ENCODE measurements at regions of chr11 and their contacts with region 1.

Region 1: DNA sequence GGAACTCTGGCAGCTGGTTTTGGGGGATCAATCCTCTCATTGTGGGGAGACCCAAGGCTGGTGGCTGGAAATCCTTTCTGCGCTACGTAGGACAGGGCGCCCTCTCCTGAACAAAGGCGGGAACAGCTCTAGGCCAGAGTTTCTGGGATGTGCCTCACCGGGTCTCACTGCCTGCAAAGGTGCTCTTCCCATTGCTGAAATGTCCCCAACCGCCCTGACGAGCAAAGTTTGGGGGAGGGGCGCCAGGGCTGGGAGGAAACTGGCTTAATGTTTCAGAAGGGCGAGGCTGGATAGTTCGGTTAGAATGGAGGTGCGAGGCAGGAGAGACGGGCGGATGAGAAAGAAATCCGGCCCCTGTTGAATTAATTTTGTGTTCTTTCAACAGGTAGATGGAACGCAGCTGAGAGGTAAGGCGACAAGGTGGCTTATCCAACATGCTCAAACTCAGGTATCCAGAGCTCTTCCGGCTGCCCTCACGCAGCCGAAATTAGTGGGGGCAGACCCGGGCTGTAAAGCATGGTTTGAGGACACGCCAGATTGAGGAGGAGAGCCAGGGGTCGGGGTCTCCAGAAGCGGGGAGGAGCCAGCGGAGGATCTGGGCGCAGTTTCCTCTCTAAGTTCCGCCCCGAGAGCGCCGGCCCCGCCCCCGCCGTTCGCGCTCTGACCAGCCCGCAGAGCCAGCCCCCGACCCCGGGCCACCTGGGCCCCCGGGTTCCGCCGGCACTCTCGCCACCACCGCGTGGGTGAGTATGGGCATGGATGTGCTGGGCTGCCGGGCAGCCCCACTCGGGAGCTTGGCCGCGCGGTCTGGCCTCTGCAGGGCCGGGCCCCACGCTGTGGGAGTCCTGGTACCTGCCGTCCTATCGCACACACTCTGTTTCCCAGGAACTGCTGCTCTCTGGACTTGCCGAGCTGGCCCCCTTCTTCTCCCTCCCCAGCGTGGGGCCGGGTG is at the start of gene PGAP2:
- DNase-seq: peak; percentile 71
- ATAC-seq: peak; percentile 85
- H3K4me3 ChIP-seq: peak within 1 kb of the TSS; percentile 91 to 99 (median 96)
- H3K4me3 Mint-ChIP-seq: peak within 1 kb of the TSS; percentile 98
- H3K27ac ChIP-seq: peak within 1 kb of the TSS; percentile 59 to 60
- H3K27ac Mint-ChIP-seq: peak within 1 kb of the TSS; percentile 92
- H3K4me1 ChIP-seq: peaks cover 6 to 17% of the 10 kb centered on the region in 2 donors
- H3K4me1 Mint-ChIP-seq: peaks cover 11% of the 10 kb centered on the region
- H3K27me3 ChIP-seq: no peaks in the 10 kb centered on the region
- H3K27me3 Mint-ChIP-seq: no peaks in the 10 kb centered on the region
- CTCF ChIP-seq: peak; percentile 61
- total RNA-seq, gene PGAP2: 20.5 and 20.8 TPM in 2 replicates

Region 2: DNA sequence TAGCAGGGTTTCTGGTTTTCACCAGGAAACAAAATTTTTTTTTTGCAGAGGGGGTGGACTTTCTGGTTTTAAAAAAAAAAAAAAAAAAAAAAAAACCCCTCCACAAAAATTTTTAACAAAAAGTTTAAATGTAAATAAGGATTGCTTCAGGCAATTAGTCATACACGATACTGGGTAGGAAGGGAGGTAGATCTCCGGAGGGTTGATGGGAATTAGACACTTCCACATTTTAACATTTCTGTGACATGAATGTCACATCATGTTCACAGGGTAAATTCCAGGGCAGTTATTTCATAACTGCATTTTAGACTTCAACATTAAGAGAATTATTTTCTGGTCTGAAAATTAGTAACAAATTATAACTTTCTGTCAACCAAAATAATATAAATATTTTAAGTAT is 26.8 kb before region 1 on chr11:
- CTCF ChIA-PET with region 1: interaction called, 23 read pairs
- POLR2A ChIA-PET with region 1: interaction called, 4 read pairs
- intact Hi-C with region 1: loop called (anchors 2 kb)
- DNase-seq: no peak
- ATAC-seq: no peak
- H3K4me3 ChIP-seq: no peak overlapping the region
- H3K4me3 Mint-ChIP-seq: no peak overlapping the region
- H3K27ac ChIP-seq: peak overlapping the region in 1 of 2 donors; percentile 50
- H3K27ac Mint-ChIP-seq: peak overlapping the region; percentile 32
- H3K4me1 ChIP-seq: peaks cover 16 to 18% of the 10 kb centered on the region in 2 donors
- H3K4me1 Mint-ChIP-seq: peaks cover 36% of the 10 kb centered on the region
- H3K27me3 ChIP-seq: no peaks in the 10 kb centered on the region
- H3K27me3 Mint-ChIP-seq: no peaks in the 10 kb centered on the region
- CTCF ChIP-seq: no peak

Region 3: DNA sequence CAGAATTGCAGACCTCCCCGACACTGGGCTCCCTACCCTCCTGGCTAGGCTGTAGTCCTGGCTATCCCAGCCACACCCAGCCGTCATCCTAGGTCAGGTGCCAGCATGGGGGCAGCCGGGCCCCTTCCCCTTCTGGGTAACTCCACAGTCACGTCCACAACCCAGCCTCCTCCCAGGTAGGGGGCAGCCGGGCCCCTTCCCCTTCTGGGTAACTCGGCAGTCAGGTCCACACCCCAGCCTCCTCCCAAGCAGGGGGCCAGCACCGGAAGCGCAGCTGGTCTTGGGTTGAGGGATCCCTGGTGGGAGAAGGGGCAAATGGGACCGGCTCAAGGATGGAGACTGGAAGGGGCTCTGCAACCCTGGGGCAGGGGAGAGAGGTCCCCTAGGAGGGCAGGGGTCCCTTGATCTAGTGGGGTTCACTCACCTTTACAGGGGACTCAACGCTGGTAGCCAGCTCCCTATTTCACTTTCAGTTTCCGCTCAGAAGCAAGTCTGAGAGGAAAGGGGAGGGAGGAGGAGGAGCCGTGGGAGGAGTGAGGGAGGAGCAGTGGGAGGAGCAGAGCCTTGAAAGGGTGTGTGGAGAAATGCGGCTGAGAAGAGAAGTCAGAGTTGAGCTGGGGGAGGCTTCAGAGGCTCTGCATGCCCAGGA is 585.1 kb after region 1 on chr11 and contains the start of gene TRIM21:
- CTCF ChIA-PET with region 1: no interaction called
- POLR2A ChIA-PET with region 1: no interaction called
- intact Hi-C with region 1: no loop called
- DNase-seq: peak; percentile 89
- ATAC-seq: peak; percentile 100
- H3K4me3 ChIP-seq: peak within 1 kb of the TSS; percentile 69 to 99 (median 85)
- H3K4me3 Mint-ChIP-seq: peak within 1 kb of the TSS; percentile 91
- H3K27ac ChIP-seq: peak within 1 kb of the TSS; percentile 68 to 82
- H3K27ac Mint-ChIP-seq: peak within 1 kb of the TSS; percentile 88
- H3K4me1 ChIP-seq: peaks cover 8 to 14% of the 10 kb centered on the region in 2 donors
- H3K4me1 Mint-ChIP-seq: peaks cover 27% of the 10 kb centered on the region
- H3K27me3 ChIP-seq: peaks cover 0 to 2% (median 0%) of the 10 kb centered on the region in 4 experiments
- H3K27me3 Mint-ChIP-seq: peaks cover 5% of the 10 kb centered on the region
- CTCF ChIP-seq: no peak
- total RNA-seq, gene TRIM21: 26.7 and 30.9 TPM in 2 replicates

Measured in B cell (primary cell).